ENCODE measurements at regions of chr14 and their contacts with region 1.

Region 1: DNA sequence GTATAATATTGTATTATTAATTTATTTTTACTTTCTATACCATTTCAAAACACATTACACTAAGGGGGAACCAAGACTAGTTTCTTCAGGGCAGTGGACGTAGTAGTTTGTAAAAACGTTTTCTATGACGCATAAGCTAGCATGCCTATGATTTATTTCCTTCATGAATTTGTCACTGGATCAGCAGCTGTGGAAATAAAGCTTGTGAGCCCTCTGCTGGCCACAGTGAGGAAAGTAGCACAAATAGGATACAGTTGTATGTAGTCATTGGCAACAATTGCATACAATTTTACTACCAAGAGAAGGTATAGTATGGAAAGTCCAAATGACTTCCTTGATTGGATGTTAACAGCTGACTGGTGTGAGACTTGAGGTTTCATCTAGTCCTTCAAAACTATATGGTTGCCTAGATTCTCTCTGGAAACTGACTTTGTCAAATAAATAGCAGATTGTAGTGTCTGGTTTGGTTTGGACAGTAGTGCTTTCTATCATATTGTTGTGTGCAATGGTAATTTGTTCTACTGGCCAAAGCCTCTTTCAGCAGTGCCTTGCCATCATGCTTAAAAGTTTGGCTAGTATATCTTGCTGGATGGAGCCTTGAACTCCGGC is 24.3 kb upstream of the PLEKHD1 start:
- DNase-seq: peak; percentile 76
- H3K4me3 ChIP-seq: no peak overlapping the region
- H3K27ac ChIP-seq: no peak overlapping the region
- H3K4me1 ChIP-seq: no peaks in the 10 kb centered on the region
- H3K27me3 ChIP-seq: no peaks in the 10 kb centered on the region
- CTCF ChIP-seq: peak; percentile 78 to 86

Region 2: DNA sequence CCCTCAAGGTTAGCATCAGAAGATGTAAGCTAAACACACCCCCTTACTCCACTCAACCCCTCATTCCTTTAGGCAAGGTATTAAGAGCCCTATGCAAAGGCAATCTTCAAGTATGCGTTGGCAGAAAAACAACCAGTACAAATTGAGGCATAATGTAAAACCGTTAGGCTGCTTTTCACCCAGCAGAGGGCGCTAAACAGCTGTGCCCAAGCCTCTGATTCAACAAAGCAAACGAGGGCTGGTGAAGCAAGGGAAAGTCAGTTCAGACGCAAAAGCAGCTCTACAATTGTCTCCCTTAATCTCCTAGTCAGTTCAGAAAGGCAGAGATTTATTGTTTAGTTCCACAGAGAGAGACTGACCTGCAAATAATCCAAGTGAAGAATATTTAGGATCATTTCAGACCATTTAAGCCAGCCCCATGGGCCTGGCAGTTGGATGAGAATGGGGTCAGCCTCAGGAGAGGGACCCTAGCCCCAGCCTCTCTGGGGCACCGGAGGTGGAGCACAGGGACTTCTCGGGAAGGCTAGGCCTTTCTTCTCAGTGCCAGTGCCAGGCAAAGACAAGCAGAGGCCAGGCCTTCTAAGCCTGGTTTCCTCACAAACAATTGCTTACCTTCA is 330.8 kb before region 1 on chr14:
- CTCF ChIA-PET with region 1: no interaction called
- dilution Hi-C with region 1: no loop called
- in situ Hi-C with region 1: loop called in 1 of 2 experiments (anchors 10 kb)
- intact Hi-C with region 1: loop called (anchors 1 kb)
- DNase-seq: peak; percentile 67
- H3K4me3 ChIP-seq: no peak overlapping the region
- H3K27ac ChIP-seq: peak overlapping the region; percentile 39
- H3K4me1 ChIP-seq: peaks cover 25% of the 10 kb centered on the region
- H3K27me3 ChIP-seq: no peaks in the 10 kb centered on the region
- CTCF ChIP-seq: peak; percentile 95 to 99

Region 3: DNA sequence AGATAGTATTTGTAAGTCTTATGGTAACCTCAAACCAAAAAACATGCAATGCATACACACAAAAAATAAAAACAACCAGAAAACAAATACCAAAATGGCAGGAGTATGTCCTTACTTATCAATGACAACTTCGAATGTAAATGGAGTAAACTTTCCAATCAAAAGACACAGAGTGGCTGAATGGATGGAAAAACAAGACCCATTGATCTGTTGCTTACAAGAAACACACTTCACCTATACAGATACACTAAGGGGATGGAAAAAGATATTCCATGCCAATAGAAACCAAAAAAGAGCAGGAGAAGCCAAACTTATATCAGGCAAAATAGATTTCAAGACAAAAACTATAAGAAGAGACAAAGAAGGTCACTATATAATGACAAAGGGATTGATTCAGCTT is 298.6 kb before region 1 on chr14:
- CTCF ChIA-PET with region 1: no interaction called
- dilution Hi-C with region 1: no loop called
- in situ Hi-C with region 1: no loop called
- intact Hi-C with region 1: no loop called
- DNase-seq: no peak
- H3K4me3 ChIP-seq: no peak overlapping the region
- H3K27ac ChIP-seq: no peak overlapping the region
- H3K4me1 ChIP-seq: no peaks in the 10 kb centered on the region
- H3K27me3 ChIP-seq: peaks cover 7% of the 10 kb centered on the region
- CTCF ChIP-seq: no peak

Region 4: DNA sequence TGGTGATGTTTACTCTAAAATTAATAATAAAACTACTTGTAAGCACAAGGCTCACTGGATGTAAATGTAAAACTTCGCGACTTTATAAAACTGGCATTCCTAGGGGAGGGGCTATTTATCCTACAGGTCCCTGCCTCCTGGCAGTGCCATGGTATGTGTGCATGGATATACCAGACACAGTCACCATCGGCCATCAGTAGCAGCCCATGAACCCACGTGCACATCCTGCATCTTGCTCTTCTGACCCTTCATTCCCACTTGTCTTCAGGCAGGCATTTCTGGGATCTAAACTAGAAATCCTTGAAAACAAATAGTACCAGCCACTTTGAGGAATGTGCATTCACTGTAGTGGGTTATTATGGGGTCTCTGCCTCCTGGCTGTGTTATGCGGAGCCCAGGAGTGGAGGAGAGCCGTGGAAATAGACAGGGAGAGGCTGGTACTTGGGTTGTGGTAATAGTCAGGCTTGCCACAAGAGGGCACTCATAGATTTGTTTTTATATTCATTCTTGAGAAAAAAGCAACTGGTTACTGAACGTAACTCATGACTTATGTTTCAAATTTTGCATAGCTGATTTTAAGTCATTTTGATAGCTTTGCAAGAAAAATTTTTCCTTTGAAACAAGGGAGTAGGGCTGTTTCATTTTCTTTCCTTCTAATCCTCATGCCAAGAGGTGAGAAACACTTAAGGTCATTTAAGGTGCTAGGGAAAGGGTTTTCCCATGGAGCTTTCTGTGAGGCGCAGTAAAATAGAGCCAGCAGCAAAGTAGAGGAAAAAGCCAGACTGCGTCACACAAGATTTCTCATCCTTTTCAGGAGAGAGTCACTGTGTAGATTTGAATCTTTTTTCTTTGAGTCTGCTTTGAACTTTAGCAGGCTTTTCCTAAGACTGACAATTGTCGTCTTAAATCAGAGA is 217.6 kb before region 1 on chr14:
- CTCF ChIA-PET with region 1: interaction called, 7 read pairs
- dilution Hi-C with region 1: loop called (anchors 5 kb)
- in situ Hi-C with region 1: no loop called
- intact Hi-C with region 1: loop called (anchors 1 kb)
- DNase-seq: peak; percentile 32
- H3K4me3 ChIP-seq: no peak overlapping the region
- H3K27ac ChIP-seq: no peak overlapping the region
- H3K4me1 ChIP-seq: no peaks in the 10 kb centered on the region
- H3K27me3 ChIP-seq: no peaks in the 10 kb centered on the region
- CTCF ChIP-seq: peak; percentile 62 to 66

Region 5: DNA sequence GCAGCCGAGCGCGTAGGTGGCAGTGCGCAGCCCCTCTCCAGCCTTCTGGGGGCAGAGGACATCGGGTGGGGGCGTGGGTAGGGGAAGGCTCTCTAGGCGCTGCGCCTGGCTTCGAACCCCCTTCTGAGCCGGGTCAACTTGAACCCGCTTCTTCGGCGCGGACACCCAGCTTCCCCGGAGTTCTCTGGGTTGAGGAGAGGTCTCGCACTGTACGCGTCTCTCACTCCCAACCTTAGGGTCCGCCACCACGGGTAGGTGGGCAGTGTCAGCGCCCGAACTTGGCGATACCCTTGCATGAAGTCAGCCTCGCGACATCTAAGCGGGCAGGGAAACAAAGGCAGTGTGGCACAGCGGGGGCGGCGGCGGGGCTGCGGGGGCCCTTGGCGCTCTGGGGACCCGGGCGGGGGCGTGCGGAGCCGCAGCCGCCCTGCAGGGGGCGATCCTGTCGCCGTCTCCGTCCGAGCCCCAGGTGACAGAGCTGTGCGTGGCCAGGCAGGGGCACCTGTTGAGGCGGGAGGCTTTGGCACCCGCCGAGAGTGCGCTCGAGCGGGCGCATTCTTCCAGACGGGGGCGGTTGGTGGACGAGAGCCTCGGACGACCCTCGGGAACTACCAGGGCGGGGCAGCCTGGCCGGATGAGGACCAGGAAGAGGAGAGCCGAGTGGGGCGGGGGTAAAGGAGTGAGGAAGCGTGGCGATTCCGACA is 199.2 kb before region 1 on chr14:
- CTCF ChIA-PET with region 1: interaction called, 5 read pairs
- dilution Hi-C with region 1: no loop called
- in situ Hi-C with region 1: loop called (anchors 10 kb)
- intact Hi-C with region 1: loop called (anchors 1 kb)
- DNase-seq: no peak
- H3K4me3 ChIP-seq: peak overlapping the region in 2 of 3 experiments; percentile 19 to 43
- H3K27ac ChIP-seq: no peak overlapping the region
- H3K4me1 ChIP-seq: peaks cover 14% of the 10 kb centered on the region
- H3K27me3 ChIP-seq: peaks cover 34% of the 10 kb centered on the region
- CTCF ChIP-seq: peak; percentile 29 to 49

Measured in mammary epithelial cell (primary cell).